ENCODE measurements at regions of chr14 and their contacts with region 1.

Region 1: DNA sequence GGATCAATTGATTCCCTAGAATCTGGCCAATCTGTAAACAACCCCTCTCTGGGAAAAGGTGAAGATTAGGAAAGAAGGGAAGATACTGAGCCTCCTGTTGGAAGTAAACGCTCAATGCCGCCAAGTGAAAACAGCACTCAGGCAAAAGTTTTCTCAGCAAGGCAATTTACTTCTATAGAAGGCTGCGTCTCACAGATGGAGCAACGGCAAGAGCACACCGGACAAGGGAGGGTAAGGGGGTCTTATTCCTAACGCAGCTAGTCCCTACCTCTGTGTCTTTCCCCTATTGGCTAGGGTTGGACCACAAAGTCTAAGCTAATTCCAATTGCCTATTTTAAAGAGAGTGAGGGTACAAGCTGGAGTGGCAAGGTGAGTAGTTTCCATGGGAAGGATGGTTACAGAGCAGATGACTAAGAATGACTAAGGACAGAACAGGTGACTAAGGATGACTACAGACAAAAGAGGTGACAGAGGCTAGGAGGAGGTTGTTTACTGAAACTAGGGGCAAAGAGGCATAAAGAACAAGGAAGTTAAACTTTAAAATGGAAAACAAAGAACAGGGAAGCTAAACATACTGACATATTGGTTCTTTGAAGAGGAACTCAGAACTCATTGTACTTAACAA is 5.6 kb upstream of the TTC9 start:
- DNase-seq: no peak
- ATAC-seq: no peak
- H3K4me3 ChIP-seq: no peak overlapping the region
- H3K27ac ChIP-seq: no peak overlapping the region
- H3K4me1 ChIP-seq: no peaks in the 10 kb centered on the region
- H3K27me3 ChIP-seq: no peaks in the 10 kb centered on the region
- CTCF ChIP-seq: no peak

Region 2: DNA sequence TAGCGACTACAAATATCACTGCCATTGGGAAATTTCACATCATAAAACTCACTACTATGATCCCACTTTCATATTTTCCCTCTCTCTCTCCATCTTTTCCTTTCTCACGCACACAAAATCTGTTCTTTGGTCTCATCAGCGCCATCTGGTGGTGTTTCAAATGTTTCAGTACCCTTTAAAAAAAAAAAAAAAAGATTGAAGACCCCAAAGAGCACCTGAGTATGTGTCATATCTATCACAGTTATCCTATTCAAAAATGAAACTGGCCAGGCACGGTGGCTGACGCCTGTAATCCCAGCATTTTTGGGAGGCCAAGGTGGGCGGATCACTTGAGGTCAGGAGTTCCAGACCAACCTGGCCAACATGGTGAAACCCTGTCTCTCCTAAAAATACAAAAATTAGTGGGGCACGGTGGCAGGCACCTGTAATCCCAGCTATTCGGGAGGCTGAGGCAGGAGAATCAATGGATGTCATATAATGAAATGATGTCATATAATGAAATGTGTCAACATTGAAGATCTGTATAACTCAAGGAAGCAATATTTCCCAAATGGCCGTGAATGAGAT is 78.1 kb after region 1 on chr14:
- intact Hi-C with region 1: loop called in 1 of 3 experiments (anchors 10 kb)
- DNase-seq: peak in 2 of 6 donors; percentile 25 to 28
- ATAC-seq: peak in 3 of 4 donors; percentile 49 to 72 (median 57)
- H3K4me3 ChIP-seq: no peak overlapping the region
- H3K27ac ChIP-seq: no peak overlapping the region
- H3K4me1 ChIP-seq: peaks cover 0 to 14% (median 12%) of the 10 kb centered on the region in 3 donors
- H3K27me3 ChIP-seq: no peaks in the 10 kb centered on the region
- CTCF ChIP-seq: peak in 3 of 4 donors; percentile 54 to 55 (median 54)

Region 3: DNA sequence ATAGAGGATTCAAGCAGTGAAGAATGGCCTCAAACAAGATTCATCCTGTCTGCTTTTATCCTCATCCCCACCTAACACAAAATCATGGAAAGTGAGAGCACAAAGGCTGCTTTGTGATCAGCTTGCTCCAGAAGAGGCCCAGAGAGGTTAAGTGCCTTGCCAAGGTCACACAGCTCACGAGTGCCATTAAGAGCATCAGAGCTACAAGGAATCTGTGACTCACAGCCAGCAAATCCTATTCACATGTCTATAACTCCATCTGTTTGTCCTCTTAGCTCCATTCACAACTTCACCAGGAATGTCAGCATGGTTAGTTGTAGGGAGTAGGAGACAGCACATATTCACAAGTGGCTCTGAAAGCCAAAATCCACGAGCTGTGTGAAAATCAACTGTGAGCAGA is 85.5 kb after region 1 on chr14:
- intact Hi-C with region 1: loop called in 2 of 3 experiments (anchors 10 kb)
- DNase-seq: no peak
- ATAC-seq: no peak
- H3K4me3 ChIP-seq: no peak overlapping the region
- H3K27ac ChIP-seq: no peak overlapping the region
- H3K4me1 ChIP-seq: peaks cover 0 to 7% (median 6%) of the 10 kb centered on the region in 3 donors
- H3K27me3 ChIP-seq: no peaks in the 10 kb centered on the region
- CTCF ChIP-seq: no peak

Region 4: DNA sequence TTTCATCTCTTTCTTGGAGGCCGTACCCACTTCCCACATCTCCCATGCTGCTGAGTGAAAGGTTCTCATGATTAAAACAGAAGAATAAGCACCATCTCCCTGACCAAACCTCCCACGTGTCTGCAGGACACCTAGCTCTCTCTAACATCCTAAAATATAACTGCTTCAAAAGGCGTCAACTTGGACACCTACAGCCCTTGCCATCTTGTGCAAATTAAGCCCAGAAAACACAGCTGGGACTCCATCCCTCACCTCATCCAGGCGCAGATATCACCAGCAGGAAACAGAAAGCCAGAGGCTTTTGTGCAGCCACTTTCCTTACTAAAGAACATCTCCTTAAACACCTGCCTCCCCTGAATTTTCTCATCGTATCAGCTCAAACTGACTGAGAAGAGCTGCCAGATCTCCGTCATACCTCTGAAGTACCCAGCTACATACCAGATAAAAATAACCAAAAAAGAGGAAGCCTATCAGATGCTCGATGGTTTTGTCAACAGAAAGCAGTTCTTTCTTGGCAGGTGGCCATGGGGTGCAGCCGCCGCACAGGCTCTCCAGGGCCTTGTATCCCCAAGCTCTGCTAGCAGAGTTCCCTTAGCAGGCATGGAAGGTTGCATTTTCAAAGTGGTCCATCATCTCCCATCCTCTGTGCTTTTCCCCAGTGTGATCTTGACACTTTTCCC is 144.5 kb after region 1 on chr14:
- intact Hi-C with region 1: no loop called
- DNase-seq: peak in 1 of 6 donors; percentile 23
- ATAC-seq: peak in 3 of 4 donors; percentile 42 to 62 (median 54)
- H3K4me3 ChIP-seq: no peak overlapping the region
- H3K27ac ChIP-seq: no peak overlapping the region
- H3K4me1 ChIP-seq: peaks cover 0 to 4% (median 0%) of the 10 kb centered on the region in 3 donors
- H3K27me3 ChIP-seq: no peaks in the 10 kb centered on the region
- CTCF ChIP-seq: no peak

Measured in pancreas (tissue), 10 donors.